ENCODE measurements at regions of chr16 and their contacts with region 1.

Region 1: GRCh38 chr16:23241005-23241404 is 58.5 kb downstream of the SCNN1G start:
- DNase-seq: peak; percentile 28
- ATAC-seq: peak; percentile 82
- H3K4me3 ChIP-seq: no peak overlapping the region
- H3K27ac ChIP-seq: no peak overlapping the region
- H3K4me1 ChIP-seq: peaks cover 13% of the 10 kb centered on the region
- H3K27me3 ChIP-seq: no peaks in the 10 kb centered on the region
- CTCF ChIP-seq: no peak

Region 2: DNA sequence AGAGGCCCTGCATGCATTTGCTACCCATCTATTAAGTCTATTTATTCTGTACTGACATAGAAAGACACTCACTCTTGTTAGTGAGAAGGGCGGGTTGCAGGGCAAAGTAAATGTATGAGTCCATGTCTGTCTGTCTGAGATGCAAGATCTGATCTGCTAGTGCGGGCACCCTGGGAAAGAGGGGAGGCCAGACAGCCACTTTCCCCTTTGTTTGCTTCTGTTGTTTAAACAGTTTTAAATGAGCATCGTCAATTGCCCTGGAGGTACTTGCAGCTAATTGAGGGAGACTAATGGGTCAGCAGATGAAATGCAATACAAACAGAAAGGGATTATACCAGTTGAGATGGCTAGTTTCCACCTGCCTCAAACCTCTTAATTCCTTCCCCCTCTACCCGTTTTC is 33.5 kb before region 1 on chr16:
- CTCF ChIA-PET with region 1: no interaction called
- POLR2A ChIA-PET with region 1: no interaction called
- intact Hi-C with region 1: loop called (anchors 1 kb)
- DNase-seq: no peak
- ATAC-seq: peak; percentile 62
- H3K4me3 ChIP-seq: no peak overlapping the region
- H3K27ac ChIP-seq: no peak overlapping the region
- H3K4me1 ChIP-seq: no peaks in the 10 kb centered on the region
- H3K27me3 ChIP-seq: no peaks in the 10 kb centered on the region
- CTCF ChIP-seq: no peak

Region 3: GRCh38 chr16:23557779-23558702 is 317.0 kb after region 1 on chr16:
- CTCF ChIA-PET with region 1: no interaction called
- POLR2A ChIA-PET with region 1: no interaction called
- intact Hi-C with region 1: no loop called
- DNase-seq: peak; percentile 34
- ATAC-seq: peak; percentile 14
- H3K4me3 ChIP-seq: peak overlapping the region; percentile 96
- H3K27ac ChIP-seq: peak overlapping the region; percentile 95
- H3K4me1 ChIP-seq: peaks cover 5% of the 10 kb centered on the region; the same call in 1 of the 2 replicates
- H3K27me3 ChIP-seq: no peaks in the 10 kb centered on the region
- CTCF ChIP-seq: no peak

Measured in PC-3 (cell line).